Naive thymus-derived CD4-positive, alpha-beta T cell (primary cell): ENCODE measurements at regions of chr9 and their contacts with region 1.

Region 1: GRCh38 chr9:121399883-121400607 is 30.0 kb upstream of the STOM start:
- DNase-seq: peak in 7 of 9 donors; percentile 25 to 67 (median 54)
- ATAC-seq: peak; percentile 66
- H3K4me3 ChIP-seq: no peak overlapping the region
- H3K4me3 Mint-ChIP-seq: no peak overlapping the region
- H3K27ac ChIP-seq: no peak overlapping the region
- H3K27ac Mint-ChIP-seq: no peak overlapping the region
- H3K4me1 ChIP-seq: no peaks in the 10 kb centered on the region
- H3K4me1 Mint-ChIP-seq: peaks cover 0 to 6% (median 0%) of the 10 kb centered on the region in 7 donors
- H3K27me3 ChIP-seq: no peaks in the 10 kb centered on the region
- H3K27me3 Mint-ChIP-seq: peaks cover 0 to 21% (median 0%) of the 10 kb centered on the region in 5 donors

Region 2: DNA sequence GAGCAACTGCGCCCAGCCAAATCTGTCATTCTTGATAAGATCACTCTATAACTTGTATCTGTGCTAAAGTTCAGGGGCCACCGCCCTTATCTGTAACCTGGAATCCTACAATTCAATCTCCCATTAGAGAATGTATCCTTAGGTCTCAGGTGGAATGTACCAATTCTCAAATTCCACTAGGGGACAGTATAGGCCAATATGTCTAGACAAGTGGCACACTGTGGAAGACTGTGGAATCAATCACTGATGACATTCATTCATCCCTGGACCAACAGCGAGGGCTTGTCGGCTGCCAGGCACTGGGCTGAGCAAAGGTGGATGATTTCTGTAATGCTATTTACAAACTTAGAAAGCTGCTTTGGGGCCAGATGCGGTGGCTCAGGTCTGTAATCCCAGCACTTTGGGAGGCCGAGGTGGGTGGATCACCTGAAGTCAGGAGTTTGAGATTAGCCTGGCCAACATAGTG is 657.1 kb before region 1 on chr9:
- CTCF ChIA-PET with region 1: no interaction called
- POLR2A ChIA-PET with region 1: no interaction called
- intact Hi-C with region 1: loop called in 1 of 2 experiments (anchors 1 kb)
- DNase-seq: peak in 5 of 9 donors; percentile 5 to 30 (median 13)
- ATAC-seq: peak; percentile 78
- H3K4me3 ChIP-seq: no peak overlapping the region
- H3K4me3 Mint-ChIP-seq: no peak overlapping the region
- H3K27ac ChIP-seq: no peak overlapping the region
- H3K27ac Mint-ChIP-seq: no peak overlapping the region
- H3K4me1 ChIP-seq: no peaks in the 10 kb centered on the region
- H3K4me1 Mint-ChIP-seq: peaks cover 0 to 4% (median 0%) of the 10 kb centered on the region in 7 donors
- H3K27me3 ChIP-seq: no peaks in the 10 kb centered on the region
- H3K27me3 Mint-ChIP-seq: no peaks in the 10 kb centered on the region

Region 3: DNA sequence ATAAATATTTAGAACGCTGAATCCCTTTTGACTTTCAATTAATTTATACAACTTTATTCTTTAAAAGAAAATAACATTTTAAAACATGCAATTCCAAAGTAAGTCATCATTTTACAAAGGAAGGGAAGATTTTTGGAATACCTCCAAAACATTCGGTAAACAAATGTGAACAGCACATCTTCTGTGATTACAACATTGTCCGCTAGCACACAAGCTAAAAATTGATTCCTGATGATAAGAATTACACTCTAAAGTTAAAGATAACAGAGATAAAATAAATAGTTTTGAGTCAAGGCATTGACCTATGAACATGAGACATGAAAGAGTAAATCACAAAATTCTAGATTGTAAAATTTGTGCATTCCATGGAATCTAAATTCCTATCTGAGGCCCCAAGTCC is 417.2 kb before region 1 on chr9:
- CTCF ChIA-PET with region 1: interaction called, 4 read pairs
- POLR2A ChIA-PET with region 1: no interaction called
- intact Hi-C with region 1: loop called in 1 of 2 experiments (anchors 1 kb)
- DNase-seq: no peak
- ATAC-seq: no peak
- H3K4me3 ChIP-seq: no peak overlapping the region
- H3K4me3 Mint-ChIP-seq: no peak overlapping the region
- H3K27ac ChIP-seq: no peak overlapping the region
- H3K27ac Mint-ChIP-seq: no peak overlapping the region
- H3K4me1 ChIP-seq: no peaks in the 10 kb centered on the region
- H3K4me1 Mint-ChIP-seq: peaks cover 0 to 10% (median 4%) of the 10 kb centered on the region in 7 donors
- H3K27me3 ChIP-seq: no peaks in the 10 kb centered on the region
- H3K27me3 Mint-ChIP-seq: peaks cover 0 to 30% (median 0%) of the 10 kb centered on the region in 5 donors

Region 4: GRCh38 chr9:121169094-121169601 is 230.9 kb before region 1 on chr9:
- CTCF ChIA-PET with region 1: no interaction called
- POLR2A ChIA-PET with region 1: no interaction called
- intact Hi-C with region 1: no loop called
- DNase-seq: peak in 7 of 9 donors; percentile 20 to 46 (median 41)
- ATAC-seq: peak; percentile 85
- H3K4me3 ChIP-seq: no peak overlapping the region
- H3K4me3 Mint-ChIP-seq: peak overlapping the region in 7 of 10 donors; percentile 21 to 70 (median 53)
- H3K27ac ChIP-seq: peak overlapping the region; percentile 67
- H3K27ac Mint-ChIP-seq: peak overlapping the region; percentile 38 to 94 (median 84)
- H3K4me1 ChIP-seq: peaks cover 0 to 23% of the 10 kb centered on the region in 2 donors
- H3K4me1 Mint-ChIP-seq: peaks cover 10 to 29% (median 25%) of the 10 kb centered on the region in 7 donors
- H3K27me3 ChIP-seq: no peaks in the 10 kb centered on the region
- H3K27me3 Mint-ChIP-seq: no peaks in the 10 kb centered on the region

Region 5: GRCh38 chr9:121213136-121213806 is 186.8 kb before region 1 on chr9:
- CTCF ChIA-PET with region 1: interaction called, 7 read pairs
- POLR2A ChIA-PET with region 1: interaction called, 3 read pairs
- intact Hi-C with region 1: loop called (anchors 1 kb)
- DNase-seq: peak; percentile 19 to 69 (median 51)
- ATAC-seq: peak; percentile 87
- H3K4me3 ChIP-seq: no peak overlapping the region
- H3K4me3 Mint-ChIP-seq: no peak overlapping the region
- H3K27ac ChIP-seq: no peak overlapping the region
- H3K27ac Mint-ChIP-seq: peak overlapping the region in 4 of 9 donors; percentile 7 to 49 (median 19)
- H3K4me1 ChIP-seq: no peaks in the 10 kb centered on the region
- H3K4me1 Mint-ChIP-seq: peaks cover 0 to 20% (median 11%) of the 10 kb centered on the region in 7 donors
- H3K27me3 ChIP-seq: no peaks in the 10 kb centered on the region
- H3K27me3 Mint-ChIP-seq: no peaks in the 10 kb centered on the region

Region 6: GRCh38 chr9:121246821-121247561 is 153.1 kb before region 1 on chr9:
- CTCF ChIA-PET with region 1: no interaction called
- POLR2A ChIA-PET with region 1: no interaction called
- intact Hi-C with region 1: no loop called
- DNase-seq: no peak
- ATAC-seq: no peak
- H3K4me3 ChIP-seq: no peak overlapping the region
- H3K4me3 Mint-ChIP-seq: no peak overlapping the region
- H3K27ac ChIP-seq: no peak overlapping the region
- H3K27ac Mint-ChIP-seq: no peak overlapping the region
- H3K4me1 ChIP-seq: no peaks in the 10 kb centered on the region
- H3K4me1 Mint-ChIP-seq: peaks cover 0 to 4% (median 0%) of the 10 kb centered on the region in 7 donors
- H3K27me3 ChIP-seq: no peaks in the 10 kb centered on the region
- H3K27me3 Mint-ChIP-seq: peaks cover 0 to 6% (median 0%) of the 10 kb centered on the region in 5 donors

Region 7: GRCh38 chr9:121871431-121872025 is 471.5 kb after region 1 on chr9:
- CTCF ChIA-PET with region 1: no interaction called
- POLR2A ChIA-PET with region 1: no interaction called
- intact Hi-C with region 1: no loop called
- DNase-seq: no peak
- ATAC-seq: no peak
- H3K4me3 ChIP-seq: no peak overlapping the region
- H3K4me3 Mint-ChIP-seq: no peak overlapping the region
- H3K27ac ChIP-seq: no peak overlapping the region
- H3K27ac Mint-ChIP-seq: no peak overlapping the region
- H3K4me1 ChIP-seq: no peaks in the 10 kb centered on the region
- H3K4me1 Mint-ChIP-seq: no peaks in the 10 kb centered on the region
- H3K27me3 ChIP-seq: no peaks in the 10 kb centered on the region
- H3K27me3 Mint-ChIP-seq: peaks cover 0 to 5% (median 0%) of the 10 kb centered on the region in 5 donors

Region 8: DNA sequence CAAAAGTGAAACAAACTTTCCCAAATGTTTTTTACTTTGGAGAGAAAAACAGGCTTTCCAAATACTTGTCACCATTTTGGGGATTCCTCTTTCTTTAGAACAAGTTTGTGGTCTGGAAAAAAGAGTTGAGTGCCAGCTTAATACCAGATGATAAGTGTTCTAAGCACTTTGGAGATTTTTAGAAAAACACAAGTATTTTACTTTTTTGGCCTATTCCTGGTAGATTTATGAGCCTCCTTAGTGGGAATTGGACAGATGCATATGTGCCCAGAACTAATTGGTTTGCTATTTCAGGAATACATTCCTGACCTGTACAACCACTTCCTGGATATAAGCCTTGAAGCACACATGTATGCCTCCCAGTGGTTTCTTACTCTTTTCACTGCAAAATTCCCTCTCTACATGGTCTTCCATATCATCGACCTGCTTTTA is 1674.0 kb after region 1 on chr9:
- CTCF ChIA-PET with region 1: no interaction called
- POLR2A ChIA-PET with region 1: no interaction called
- intact Hi-C with region 1: no loop called
- DNase-seq: no peak
- ATAC-seq: no peak
- H3K4me3 ChIP-seq: no peak overlapping the region
- H3K4me3 Mint-ChIP-seq: no peak overlapping the region
- H3K27ac ChIP-seq: no peak overlapping the region
- H3K27ac Mint-ChIP-seq: no peak overlapping the region
- H3K4me1 ChIP-seq: no peaks in the 10 kb centered on the region
- H3K4me1 Mint-ChIP-seq: peaks cover 0 to 3% (median 0%) of the 10 kb centered on the region in 7 donors
- H3K27me3 ChIP-seq: no peaks in the 10 kb centered on the region
- H3K27me3 Mint-ChIP-seq: no peaks in the 10 kb centered on the region